ENCODE measurements at regions of chr1 and their contacts with region 1.

Region 1: GRCh38 chr1:221356693-221357092 is 385.2 kb downstream of the DUSP10 start:
- DNase-seq: no peak
- ATAC-seq: no peak
- H3K4me3 Mint-ChIP-seq: no peak overlapping the region
- H3K27ac Mint-ChIP-seq: no peak overlapping the region
- H3K4me1 Mint-ChIP-seq: no peaks in the 10 kb centered on the region
- H3K27me3 Mint-ChIP-seq: peaks cover 6% of the 10 kb centered on the region

Region 2: GRCh38 chr1:220594356-220594755 is 762.3 kb before region 1 on chr1:
- CTCF ChIA-PET with region 1: no interaction called
- POLR2A ChIA-PET with region 1: no interaction called
- intact Hi-C with region 1: no loop called
- DNase-seq: no peak
- ATAC-seq: no peak
- H3K4me3 Mint-ChIP-seq: no peak overlapping the region
- H3K27ac Mint-ChIP-seq: no peak overlapping the region
- H3K4me1 Mint-ChIP-seq: no peaks in the 10 kb centered on the region
- H3K27me3 Mint-ChIP-seq: no peaks in the 10 kb centered on the region

Region 3: DNA sequence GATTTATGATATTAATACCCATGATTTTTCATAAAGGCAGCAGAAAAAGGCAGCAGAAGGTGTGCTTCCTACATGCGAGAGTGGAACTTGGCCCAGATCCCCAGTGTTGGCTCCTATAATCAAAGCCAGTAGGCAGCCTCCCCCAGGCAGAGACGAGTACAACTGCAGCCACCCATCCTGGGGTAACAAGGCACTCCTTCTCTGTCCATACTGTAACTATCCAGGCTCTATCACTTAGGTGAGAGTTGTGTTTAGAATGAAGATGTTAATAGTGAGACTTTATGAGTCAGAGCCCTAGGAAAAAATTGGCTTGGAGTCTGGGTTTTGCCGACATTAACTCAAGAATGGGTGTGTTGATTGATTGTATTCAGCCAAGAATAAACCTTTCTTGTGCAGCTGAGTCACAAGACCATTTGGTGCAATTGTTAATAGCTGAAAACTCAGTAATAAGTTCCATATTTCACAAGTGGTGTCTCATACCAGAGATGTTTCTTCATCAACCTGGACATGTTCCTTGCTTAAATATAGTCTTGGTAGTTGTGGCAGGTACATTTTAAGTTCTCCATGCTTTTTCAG is 62.9 kb after region 1 on chr1:
- CTCF ChIA-PET with region 1: no interaction called
- POLR2A ChIA-PET with region 1: no interaction called
- intact Hi-C with region 1: loop called in 1 of 2 experiments (anchors 2 kb)
- DNase-seq: no peak
- ATAC-seq: no peak
- H3K4me3 Mint-ChIP-seq: no peak overlapping the region
- H3K27ac Mint-ChIP-seq: no peak overlapping the region
- H3K4me1 Mint-ChIP-seq: no peaks in the 10 kb centered on the region
- H3K27me3 Mint-ChIP-seq: peaks cover 3% of the 10 kb centered on the region

Region 4: DNA sequence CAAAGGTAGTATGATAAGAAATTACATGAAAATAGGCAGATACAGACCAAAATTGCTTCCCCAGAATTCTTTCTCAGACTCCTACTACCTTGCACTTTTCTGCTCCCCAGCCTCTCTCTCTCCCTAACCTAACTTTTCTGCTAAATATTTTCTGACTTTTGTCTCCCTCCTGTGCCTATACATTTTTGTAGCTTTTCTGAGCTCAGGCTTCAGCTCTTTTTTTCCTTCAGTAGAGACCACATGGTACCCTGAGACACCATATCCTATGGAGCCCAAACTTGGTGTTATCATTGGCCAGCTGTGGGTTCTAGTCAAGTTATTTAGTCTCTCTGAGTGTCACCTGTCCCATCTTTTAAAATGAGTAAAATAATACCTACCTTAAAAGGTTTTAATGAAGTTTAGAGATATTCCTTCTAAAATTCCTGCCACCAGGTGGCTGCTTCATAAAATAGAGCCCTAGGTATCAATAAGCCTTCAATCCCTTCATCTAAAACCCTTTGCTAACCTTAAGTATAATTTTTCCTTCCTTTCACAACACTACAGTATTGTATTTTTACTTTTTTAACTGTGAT is 622.9 kb after region 1 on chr1:
- CTCF ChIA-PET with region 1: no interaction called
- POLR2A ChIA-PET with region 1: no interaction called
- intact Hi-C with region 1: no loop called
- DNase-seq: no peak
- ATAC-seq: no peak
- H3K4me3 Mint-ChIP-seq: no peak overlapping the region
- H3K27ac Mint-ChIP-seq: no peak overlapping the region
- H3K4me1 Mint-ChIP-seq: peaks cover 2% of the 10 kb centered on the region
- H3K27me3 Mint-ChIP-seq: peaks cover 5% of the 10 kb centered on the region

Measured in activated CD4-positive, alpha-beta T cell treated with anti-CD3 and anti-CD28 coated beads for 36 hours (primary cell).